ENCODE measurements at regions of chr4 and their contacts with region 1.

Region 1: DNA sequence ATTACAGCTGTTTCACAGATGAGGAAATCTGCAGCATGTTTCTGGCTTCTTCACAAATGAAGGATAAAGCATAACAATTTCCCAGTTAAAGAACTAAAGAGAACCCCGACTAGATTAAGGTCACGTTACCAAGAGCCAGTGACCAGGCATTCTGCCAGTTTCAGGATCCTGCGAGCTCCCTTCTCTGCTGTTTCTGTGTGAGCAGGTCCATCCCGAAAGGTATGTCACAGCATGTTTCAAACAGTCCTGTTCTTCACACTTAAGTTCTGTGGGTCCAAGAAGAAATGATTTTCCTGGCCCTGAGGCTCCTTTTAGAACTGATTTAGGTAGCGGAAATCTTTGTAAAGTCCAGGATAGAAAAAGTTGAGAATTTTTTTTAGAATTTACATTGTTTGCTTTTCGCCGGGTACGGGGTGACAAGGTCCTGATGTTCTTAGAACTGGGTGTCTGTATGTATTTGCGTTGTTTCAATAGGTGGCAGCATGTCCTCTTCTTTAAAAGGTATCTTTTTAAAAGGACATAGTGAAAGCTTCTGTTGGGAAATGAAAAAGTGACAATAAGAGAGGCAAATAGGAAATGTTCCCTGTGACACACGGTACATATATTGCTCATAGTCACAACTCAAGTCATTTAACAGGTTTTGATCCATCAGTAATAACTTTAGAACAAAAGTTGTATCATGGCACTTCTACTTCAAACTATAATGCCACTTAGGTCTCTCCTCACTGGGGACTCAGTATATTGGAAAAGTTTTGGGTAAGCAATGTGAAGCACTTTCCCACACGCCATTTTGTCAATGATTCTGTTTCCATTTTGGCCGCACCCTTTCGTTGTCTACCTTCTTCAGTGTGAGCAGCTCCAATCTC is 18.4 kb downstream of the IL21 start:
- DNase-seq: no peak
- ATAC-seq: no peak
- H3K4me3 Mint-ChIP-seq: no peak overlapping the region
- H3K27ac Mint-ChIP-seq: no peak overlapping the region
- H3K4me1 Mint-ChIP-seq: no peaks in the 10 kb centered on the region
- H3K27me3 Mint-ChIP-seq: peaks cover 19% of the 10 kb centered on the region
- CTCF ChIP-seq: no peak

Region 2: DNA sequence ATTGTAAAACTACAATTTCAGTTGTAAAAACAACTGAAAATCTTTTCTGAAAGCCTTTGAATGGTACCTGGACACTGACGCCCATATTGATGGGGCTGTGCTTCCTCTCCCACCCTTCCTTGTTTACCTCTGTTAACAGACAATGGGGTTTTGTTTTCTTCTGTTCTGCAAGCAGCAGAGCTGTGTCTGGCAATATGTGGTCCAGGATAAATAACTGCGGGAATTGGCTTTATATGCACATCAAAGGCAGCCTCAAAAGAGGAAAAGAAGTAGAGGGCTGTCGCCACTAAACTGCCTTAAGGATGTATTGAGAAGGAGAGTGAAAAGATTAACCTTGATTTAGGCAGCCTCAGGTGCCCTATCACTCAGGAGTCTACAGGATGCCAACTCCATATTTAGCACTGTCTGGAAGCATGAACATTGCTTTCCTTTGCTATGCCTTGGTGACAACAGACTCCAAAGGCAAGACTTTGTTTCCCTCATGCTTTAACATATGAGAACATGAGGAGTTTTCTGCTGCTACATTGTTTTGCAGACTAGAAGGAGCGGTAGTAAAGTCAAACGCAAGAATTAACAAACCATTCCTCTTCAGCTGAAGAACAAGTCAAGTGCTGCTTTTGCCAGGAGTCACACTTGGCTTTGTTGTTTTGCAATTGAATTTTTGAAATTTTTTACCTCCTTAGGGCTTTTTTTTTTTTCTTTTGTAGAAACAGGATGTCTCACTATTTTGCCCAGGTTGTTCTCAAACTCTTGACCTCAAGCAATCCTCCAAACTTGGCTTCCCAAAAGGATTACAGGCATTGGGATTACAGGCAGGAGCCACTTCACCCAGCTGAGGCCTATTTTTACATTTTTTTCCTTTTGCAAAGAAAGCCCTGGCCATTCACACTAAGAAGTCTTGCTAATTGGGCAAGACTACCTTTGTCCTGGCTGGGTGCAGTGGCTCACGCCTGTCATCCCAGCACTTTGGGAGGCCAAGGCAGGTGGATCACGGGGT is 15.4 kb after region 1 on chr4:
- CTCF ChIA-PET with region 1: no interaction called
- POLR2A ChIA-PET with region 1: no interaction called
- intact Hi-C with region 1: no loop called
- DNase-seq: no peak
- ATAC-seq: no peak
- H3K4me3 Mint-ChIP-seq: no peak overlapping the region
- H3K27ac Mint-ChIP-seq: no peak overlapping the region
- H3K4me1 Mint-ChIP-seq: no peaks in the 10 kb centered on the region
- H3K27me3 Mint-ChIP-seq: no peaks in the 10 kb centered on the region
- CTCF ChIP-seq: no peak

Region 3: DNA sequence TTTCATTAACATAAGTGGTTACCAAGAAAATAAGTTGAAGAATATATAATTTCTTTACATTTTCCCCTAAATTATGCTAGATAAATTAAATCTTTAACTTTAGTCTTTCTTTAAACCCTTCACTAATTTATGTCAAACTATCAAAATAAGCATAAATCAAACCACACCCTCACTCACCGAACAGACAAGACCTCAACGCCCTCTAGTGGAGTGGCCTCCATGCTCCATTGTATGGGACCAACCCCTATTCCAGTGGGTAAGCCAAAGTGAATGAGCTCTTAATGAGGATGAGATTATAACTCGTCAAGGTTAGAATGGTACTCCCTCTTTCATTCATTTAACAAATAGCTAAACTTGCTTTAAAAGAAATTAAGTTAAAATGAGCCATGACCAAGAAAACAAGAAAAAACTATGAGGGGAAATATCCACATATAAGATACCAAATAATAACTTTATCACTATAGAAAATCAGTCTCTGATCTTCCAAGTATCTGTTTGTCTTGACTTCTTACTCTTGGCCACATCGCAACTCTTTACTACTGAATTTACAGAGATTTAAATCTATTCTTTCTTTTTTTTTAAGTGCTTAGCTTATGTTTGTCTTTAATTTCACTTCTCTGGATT is 114.4 kb after region 1 on chr4:
- CTCF ChIA-PET with region 1: no interaction called
- POLR2A ChIA-PET with region 1: no interaction called
- intact Hi-C with region 1: loop called (anchors 1 kb)
- DNase-seq: no peak
- ATAC-seq: peak; percentile 82
- H3K4me3 Mint-ChIP-seq: no peak overlapping the region
- H3K27ac Mint-ChIP-seq: no peak overlapping the region
- H3K4me1 Mint-ChIP-seq: no peaks in the 10 kb centered on the region
- H3K27me3 Mint-ChIP-seq: peaks cover 7% of the 10 kb centered on the region
- CTCF ChIP-seq: no peak

Measured in activated B cell treated with CpG ODN at 0.5 μM for 24 hours (primary cell).